ENCODE measurements at regions of chr17 and their contacts with region 1.

Region 1: GRCh38 chr17:28967221-28968140 is 16.2 kb upstream of the PHF12 start:
- DNase-seq: no peak
- H3K4me3 ChIP-seq: no peak overlapping the region
- H3K27ac ChIP-seq: no peak overlapping the region
- H3K4me1 ChIP-seq: peaks cover 0 to 37% of the 10 kb centered on the region in 2 experiments; a peak in 3 of 4 replicates
- H3K27me3 ChIP-seq: no peaks in the 10 kb centered on the region; the same call in 1 of the 2 replicates
- CTCF ChIP-seq: no peak
- EP300 ChIP-seq: no peak
- RAD21 ChIP-seq: no peak

Region 2: DNA sequence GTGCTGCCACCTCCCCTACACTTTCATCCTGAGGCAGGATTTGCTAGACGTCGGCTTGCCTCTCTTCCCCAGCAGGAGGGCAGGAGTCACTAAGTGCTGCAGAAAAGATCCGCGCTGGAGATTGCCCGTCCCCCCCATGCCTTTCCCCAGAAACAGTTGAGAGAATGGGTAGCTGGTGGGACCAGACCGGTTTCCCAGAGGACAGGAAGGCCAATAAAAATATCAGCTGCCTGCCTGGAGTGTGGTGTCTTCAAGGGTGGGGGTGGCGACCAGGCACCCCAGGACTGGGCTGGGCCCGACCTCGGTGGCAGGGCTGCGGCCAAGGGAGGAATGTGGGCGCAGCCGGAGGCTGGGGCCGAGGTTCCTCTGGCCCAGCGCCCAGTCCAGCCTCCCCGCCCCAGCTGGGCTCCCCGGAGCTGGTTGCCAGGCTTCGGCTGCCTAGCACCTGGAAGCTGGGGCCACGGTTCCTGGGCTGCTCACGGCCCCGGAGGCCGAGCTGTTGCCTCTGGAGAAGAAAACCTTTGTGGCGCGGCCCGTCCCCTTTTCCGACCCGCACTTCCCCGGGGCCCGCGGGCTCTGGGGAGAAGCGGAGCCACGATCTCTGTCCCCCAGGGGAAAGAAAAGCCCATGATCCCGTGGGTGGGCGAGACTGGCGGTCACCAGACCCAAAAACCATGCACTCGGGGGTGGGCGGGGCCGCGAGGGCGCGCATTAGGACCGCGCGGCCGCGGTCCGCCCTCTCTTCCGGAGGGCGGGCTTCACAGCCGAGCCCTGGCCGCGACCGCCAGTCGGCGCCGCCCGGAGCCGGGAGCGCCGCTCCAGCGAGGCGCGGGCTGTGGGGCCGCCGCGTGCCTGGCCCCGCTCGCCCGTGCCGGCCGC is 224.0 kb before region 1 on chr17 and contains the start of gene TRAF4:
- CTCF ChIA-PET with region 1: no interaction called
- POLR2A ChIA-PET with region 1: no interaction called
- DNase-seq: peak; percentile 92
- H3K4me3 ChIP-seq: peak within 1 kb of the TSS; percentile 83 to 95
- H3K27ac ChIP-seq: peak within 1 kb of the TSS; percentile 97 to 98
- H3K4me1 ChIP-seq: peaks cover 23 to 46% of the 10 kb centered on the region in 2 experiments; a peak in 3 of 4 replicates
- H3K27me3 ChIP-seq: no peaks in the 10 kb centered on the region
- CTCF ChIP-seq: no peak
- EP300 ChIP-seq: 0 out of 4 replicates have a peak, but pooled peaks of 1 of the 2 experiments have one; percentile 2
- RAD21 ChIP-seq: 0 out of 2 replicates have a peak, but pooled peaks have one; percentile 10
- polyA plus RNA-seq, gene TRAF4: 95.7 and 104 TPM in 2 replicates

Region 3: DNA sequence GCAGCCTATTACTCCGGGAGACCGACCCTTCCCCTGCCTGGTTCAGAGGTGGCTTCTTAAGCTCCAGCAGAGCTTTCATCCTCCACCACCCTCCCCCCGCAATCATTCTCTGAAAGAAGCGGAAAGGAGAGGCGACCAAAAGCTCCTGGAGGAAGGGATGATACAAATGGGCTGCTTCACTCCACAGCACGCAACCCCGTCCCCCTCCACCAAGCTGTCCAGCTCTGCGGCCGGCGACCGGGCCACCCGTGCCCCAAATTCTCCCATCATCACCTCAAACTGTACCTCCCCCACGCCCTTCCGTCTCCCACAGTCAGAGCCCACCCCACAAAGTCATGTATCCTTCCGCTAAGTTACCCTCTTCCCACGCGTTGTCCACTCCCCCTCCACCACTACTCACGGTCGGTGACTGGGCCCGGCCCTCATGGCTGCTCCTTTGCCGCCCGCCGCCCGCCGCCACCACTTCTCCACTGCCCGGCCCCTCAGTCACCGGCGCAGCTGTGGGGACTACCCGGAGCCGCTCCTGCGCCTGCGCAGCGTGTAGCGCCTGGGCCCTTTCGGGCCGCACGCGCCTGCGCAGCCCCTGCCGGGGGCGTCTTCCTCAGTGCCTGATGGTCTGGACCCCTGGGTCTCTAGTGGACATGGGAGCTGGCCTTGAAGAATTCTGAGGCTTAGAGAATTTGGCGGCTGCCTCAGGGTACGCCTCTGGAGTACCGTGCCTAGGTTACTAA is 125.0 kb before region 1 on chr17 and contains the start of gene FAM222B:
- CTCF ChIA-PET with region 1: no interaction called
- POLR2A ChIA-PET with region 1: no interaction called
- DNase-seq: peak; percentile 99
- H3K4me3 ChIP-seq: peak within 1 kb of the TSS; percentile 70 to 91
- H3K27ac ChIP-seq: peak within 1 kb of the TSS; percentile 58 to 73
- H3K4me1 ChIP-seq: peaks cover 3 to 5% of the 10 kb centered on the region in 2 experiments; a peak in 1 of 4 replicates
- H3K27me3 ChIP-seq: no peaks in the 10 kb centered on the region
- CTCF ChIP-seq: no peak
- EP300 ChIP-seq: no peak
- RAD21 ChIP-seq: no peak
- polyA plus RNA-seq, gene FAM222B: 5.8 and 9.0 TPM in 2 replicates

Region 4: DNA sequence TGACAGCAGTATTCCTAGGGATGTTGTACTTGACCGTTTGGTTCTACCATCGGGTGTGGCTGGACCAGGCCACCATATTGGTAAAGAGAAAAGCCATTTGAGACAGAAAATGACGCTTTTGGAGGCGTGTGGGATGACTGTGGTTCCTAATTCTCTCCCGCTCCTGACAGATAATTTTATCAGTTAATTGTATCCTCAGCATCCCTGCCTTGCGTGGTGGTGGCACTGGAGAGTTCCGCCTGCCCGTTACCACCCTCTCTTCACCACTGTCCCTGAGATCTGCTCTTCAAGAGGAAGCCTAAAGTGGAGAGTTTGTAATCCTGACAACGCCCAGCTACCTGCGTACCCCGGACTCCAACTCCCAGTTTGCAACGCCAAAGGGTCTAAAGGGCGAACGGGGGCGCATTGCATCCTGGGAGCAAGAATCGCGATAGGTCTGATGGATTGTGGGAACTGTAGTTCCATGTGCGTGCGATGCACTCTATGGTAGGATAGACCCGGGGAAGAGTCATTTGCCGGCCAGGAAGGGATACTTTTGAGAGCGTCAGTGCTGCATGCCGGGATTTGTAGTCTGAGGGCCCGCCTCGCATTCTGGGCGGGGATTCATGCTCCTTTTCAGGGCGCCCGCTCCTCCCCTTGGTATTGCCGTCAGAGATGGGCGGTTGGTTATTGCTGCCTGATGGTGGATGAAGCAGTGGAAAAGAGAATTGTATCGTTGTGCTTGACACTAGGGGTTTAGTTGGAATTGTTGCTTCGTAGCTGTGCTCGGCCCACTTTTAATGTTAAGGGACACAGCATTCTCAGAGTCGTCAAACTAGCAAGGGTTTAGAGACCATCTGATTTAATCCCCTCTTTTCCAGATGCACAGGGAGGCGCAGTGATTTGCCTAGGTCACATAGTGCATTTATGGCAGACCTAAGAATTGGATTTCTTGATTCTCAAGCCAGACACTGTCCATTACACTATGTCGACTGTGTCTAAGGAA is 15.2 kb before region 1 on chr17:
- CTCF ChIA-PET with region 1: interaction called, 75 read pairs
- POLR2A ChIA-PET with region 1: interaction called, 4 read pairs
- DNase-seq: peak; percentile 88
- H3K4me3 ChIP-seq: peak overlapping the region; percentile 80 to 81
- H3K27ac ChIP-seq: peak overlapping the region; percentile 99 to 100
- H3K4me1 ChIP-seq: peaks cover 14 to 24% of the 10 kb centered on the region in 2 experiments
- H3K27me3 ChIP-seq: no peaks in the 10 kb centered on the region
- CTCF ChIP-seq: no peak
- EP300 ChIP-seq: no peak
- RAD21 ChIP-seq: no peak

Region 5: DNA sequence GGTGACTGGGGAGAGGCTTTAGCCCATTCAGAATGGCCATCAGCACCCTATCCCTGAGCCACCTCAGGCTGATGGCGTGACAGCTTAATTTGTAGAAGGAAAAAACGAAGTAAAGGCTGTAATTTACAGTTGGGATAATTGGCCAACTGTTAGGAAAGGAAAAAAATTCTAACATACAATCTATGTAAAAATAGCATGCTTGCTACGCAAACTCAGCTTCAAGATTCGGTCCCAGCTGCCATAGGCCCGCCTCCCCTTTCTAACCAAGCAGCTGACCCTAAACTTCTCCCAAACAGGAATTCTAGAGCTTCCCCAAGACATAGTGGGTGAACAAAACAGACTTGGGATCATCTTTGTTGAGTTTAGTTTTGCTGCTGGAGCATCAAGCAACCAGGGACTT is 33.5 kb after region 1 on chr17:
- CTCF ChIA-PET with region 1: interaction called, 11 read pairs
- POLR2A ChIA-PET with region 1: no interaction called
- DNase-seq: no peak
- H3K4me3 ChIP-seq: no peak overlapping the region
- H3K27ac ChIP-seq: no peak overlapping the region
- H3K4me1 ChIP-seq: peaks cover under 1 to 47% of the 10 kb centered on the region in 2 experiments; a peak in 2 of 4 replicates
- H3K27me3 ChIP-seq: peaks cover 28% of the 10 kb centered on the region
- CTCF ChIP-seq: no peak
- EP300 ChIP-seq: no peak
- RAD21 ChIP-seq: no peak

Region 6: DNA sequence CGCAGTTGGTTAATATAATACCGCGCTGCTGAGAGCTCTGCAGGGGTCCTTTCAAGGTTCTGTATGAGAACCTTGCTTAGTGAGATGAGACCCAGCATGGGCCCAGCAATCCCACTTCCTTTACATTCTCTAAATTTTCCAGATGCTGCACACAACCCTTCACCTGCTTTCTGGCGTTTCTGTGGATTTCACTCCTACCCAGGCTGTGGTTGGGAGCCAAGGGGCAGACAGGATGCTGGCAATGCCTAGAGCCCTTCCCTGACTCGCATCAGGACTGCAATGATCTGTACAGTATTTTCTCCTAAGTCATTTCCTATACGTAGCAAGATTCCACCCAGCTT is 65.3 kb after region 1 on chr17:
- CTCF ChIA-PET with region 1: interaction called, 16 read pairs
- POLR2A ChIA-PET with region 1: no interaction called
- DNase-seq: no peak
- H3K4me3 ChIP-seq: no peak overlapping the region
- H3K27ac ChIP-seq: no peak overlapping the region
- H3K4me1 ChIP-seq: peaks cover 0 to 8% of the 10 kb centered on the region in 2 experiments; a peak in 2 of 4 replicates
- H3K27me3 ChIP-seq: peaks cover 35% of the 10 kb centered on the region; the same call in 1 of the 2 replicates
- CTCF ChIP-seq: no peak
- EP300 ChIP-seq: no peak
- RAD21 ChIP-seq: no peak

Region 7: GRCh38 chr17:29048440-29049368 is 81.2 kb after region 1 on chr17:
- CTCF ChIA-PET with region 1: interaction called, 17 read pairs
- POLR2A ChIA-PET with region 1: interaction called, 17 read pairs
- DNase-seq: peak; percentile 80
- H3K4me3 ChIP-seq: no peak overlapping the region
- H3K27ac ChIP-seq: peak overlapping the region; percentile 55 to 99
- H3K4me1 ChIP-seq: peaks cover 27 to 64% of the 10 kb centered on the region in 2 experiments
- H3K27me3 ChIP-seq: no peaks in the 10 kb centered on the region
- CTCF ChIP-seq: no peak
- EP300 ChIP-seq: peak in 1 of 2 experiments; percentile 100; a peak in 2 of 4 replicates
- RAD21 ChIP-seq: peak; percentile 20

Region 8: DNA sequence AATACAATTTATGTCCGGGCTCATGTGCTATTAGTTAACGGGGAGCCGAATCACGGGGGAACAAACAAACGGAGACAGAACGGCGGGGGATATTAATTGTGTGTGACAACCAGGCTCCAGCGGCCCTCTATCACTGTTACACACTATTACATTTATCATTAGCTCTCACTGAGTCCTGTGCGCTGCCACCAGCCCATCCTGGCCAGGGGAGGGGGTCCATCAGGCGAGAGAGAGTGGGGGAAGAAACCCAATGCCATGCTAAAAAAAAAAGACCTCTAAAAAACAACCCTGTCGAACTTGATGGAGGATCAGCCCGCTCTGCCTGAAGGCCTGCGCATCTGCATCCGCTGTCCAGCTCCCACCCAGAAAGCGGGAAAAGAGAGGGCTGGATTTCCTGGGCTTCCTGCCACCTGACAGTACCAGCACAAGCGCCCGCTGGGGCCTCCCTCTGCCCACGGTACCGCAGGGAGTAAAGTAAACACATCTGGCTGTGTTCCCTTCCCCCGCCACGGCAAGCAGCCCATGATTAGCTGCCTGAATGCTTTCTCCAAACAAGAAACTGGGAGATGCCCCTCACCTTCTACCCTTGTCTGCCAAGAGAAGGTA is 117.2 kb after region 1 on chr17:
- CTCF ChIA-PET with region 1: interaction called, 18 read pairs
- POLR2A ChIA-PET with region 1: no interaction called
- DNase-seq: peak; percentile 90
- H3K4me3 ChIP-seq: no peak overlapping the region
- H3K27ac ChIP-seq: peak overlapping the region in 1 of 2 experiments; percentile 89; a peak in 2 of 4 replicates
- H3K4me1 ChIP-seq: peaks cover 0 to 17% of the 10 kb centered on the region in 2 experiments; a peak in 2 of 4 replicates
- H3K27me3 ChIP-seq: no peaks in the 10 kb centered on the region
- CTCF ChIP-seq: no peak
- EP300 ChIP-seq: peak in 1 of 2 experiments; percentile 51; a peak in 1 of 4 replicates
- RAD21 ChIP-seq: no peak; the same call in 1 of the 2 replicates

Region 9: GRCh38 chr17:29133146-29133713 is 165.7 kb after region 1 on chr17:
- CTCF ChIA-PET with region 1: interaction called, 21 read pairs
- POLR2A ChIA-PET with region 1: no interaction called
- DNase-seq: no peak
- H3K4me3 ChIP-seq: no peak overlapping the region
- H3K27ac ChIP-seq: peak overlapping the region; percentile 50 to 62; a peak in 2 of 4 replicates
- H3K4me1 ChIP-seq: peaks cover 20 to 27% of the 10 kb centered on the region in 2 experiments
- H3K27me3 ChIP-seq: no peaks in the 10 kb centered on the region
- CTCF ChIP-seq: no peak
- EP300 ChIP-seq: no peak
- RAD21 ChIP-seq: no peak